Body of pancreas (tissue), 4 donors: ENCODE measurements at regions of chr15 and their contacts with region 1.

Region 1: GRCh38 chr15:89888214-89888804 is 5.5 kb downstream of the AP3S2 start:
- DNase-seq: peak; percentile 53 to 68 (median 59)
- ATAC-seq: peak; percentile 60
- H3K4me3 ChIP-seq: no peak overlapping the region
- H3K27ac ChIP-seq: no peak overlapping the region
- H3K4me1 ChIP-seq: peaks cover 23% of the 10 kb centered on the region
- H3K27me3 ChIP-seq: no peaks in the 10 kb centered on the region
- CTCF ChIP-seq: peak in 6 of 7 experiments; percentile 32 to 65 (median 51)
- POLR2A ChIP-seq: no peak

Region 2: DNA sequence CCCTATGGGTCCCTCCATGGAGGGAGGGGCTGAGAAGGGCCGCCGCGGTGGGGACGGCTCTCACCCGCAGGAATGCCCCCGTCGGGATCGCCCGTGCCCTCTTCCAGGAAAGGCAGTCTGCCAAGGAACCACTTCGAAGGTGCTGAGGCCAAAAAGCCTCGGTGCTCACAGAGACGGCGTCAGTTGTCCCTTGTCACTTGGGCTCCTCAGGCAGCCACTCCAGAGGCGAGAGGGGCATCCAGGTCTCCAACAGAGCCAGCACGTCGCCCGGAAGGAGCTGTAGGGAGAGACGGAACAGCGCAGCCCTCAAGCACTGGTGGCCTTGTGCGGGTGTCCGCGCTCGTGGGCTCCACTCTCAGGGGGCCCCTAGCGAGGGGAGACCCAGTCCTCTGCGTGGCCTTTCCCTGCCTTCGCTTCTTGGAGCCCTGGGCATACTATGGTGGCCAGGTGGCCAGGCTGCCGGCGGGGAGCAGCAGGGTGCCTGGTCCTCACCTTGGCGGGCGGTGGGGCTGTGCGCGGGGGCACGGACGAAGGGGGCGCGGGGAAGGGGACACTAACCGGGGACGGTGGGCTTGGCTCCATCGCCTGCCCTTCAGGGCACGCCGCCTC is 138.3 kb before region 1 on chr15:
- intact Hi-C with region 1: loop called (anchors 5 kb)
- DNase-seq: peak; percentile 34 to 53 (median 46)
- ATAC-seq: peak; percentile 21
- H3K4me3 ChIP-seq: peak overlapping the region; percentile 30 to 57
- H3K27ac ChIP-seq: peak overlapping the region; percentile 71 to 85 (median 79)
- H3K4me1 ChIP-seq: peaks cover 28% of the 10 kb centered on the region
- H3K27me3 ChIP-seq: no peaks in the 10 kb centered on the region
- CTCF ChIP-seq: no peak
- POLR2A ChIP-seq: no peak